Activated naive CD4-positive, alpha-beta T cell treated with anti-CD3 and anti-CD28 coated beads for 36 hours (primary cell): ENCODE measurements at regions of chr14 and their contacts with region 1.

Region 1: DNA sequence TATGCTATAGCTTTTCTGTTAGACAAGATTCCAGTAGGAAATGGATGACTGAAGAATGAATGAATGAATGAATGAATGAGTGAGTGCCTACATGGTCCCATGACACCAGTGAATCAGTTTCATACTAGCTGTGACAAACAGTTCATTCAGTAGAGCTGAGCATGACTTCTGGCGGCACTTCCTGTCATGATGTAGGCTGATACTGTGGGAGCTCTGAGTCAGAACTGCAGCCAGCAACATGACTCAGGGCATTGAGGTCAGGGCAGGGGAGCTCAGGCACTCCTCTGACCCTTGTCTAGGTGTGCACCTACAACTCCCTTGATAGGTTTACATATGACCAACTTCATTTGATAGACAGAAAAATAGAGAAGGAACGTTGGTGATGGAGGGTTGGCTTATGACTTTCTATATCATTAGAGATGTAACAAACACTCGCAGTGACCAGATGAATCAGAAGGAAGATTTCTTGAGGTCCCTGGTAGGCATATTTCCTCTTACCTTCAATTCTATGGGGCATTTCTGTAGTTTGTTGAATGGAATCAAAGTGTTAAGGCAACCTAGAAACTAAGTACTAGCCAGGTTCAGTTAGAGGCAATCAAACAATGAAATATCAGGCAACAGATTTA is 139.3 kb upstream of the ARHGAP5 start:
- DNase-seq: peak; percentile 89
- H3K4me3 Mint-ChIP-seq: no peak overlapping the region
- H3K27ac Mint-ChIP-seq: peak overlapping the region; percentile 20
- H3K4me1 Mint-ChIP-seq: peaks cover 20% of the 10 kb centered on the region
- H3K27me3 Mint-ChIP-seq: no peaks in the 10 kb centered on the region

Region 2: GRCh38 chr14:31592631-31593030 is 345.2 kb before region 1 on chr14:
- CTCF ChIA-PET with region 1: no interaction called
- intact Hi-C with region 1: no loop called
- DNase-seq: no peak
- H3K4me3 Mint-ChIP-seq: no peak overlapping the region
- H3K27ac Mint-ChIP-seq: no peak overlapping the region
- H3K4me1 Mint-ChIP-seq: no peaks in the 10 kb centered on the region
- H3K27me3 Mint-ChIP-seq: no peaks in the 10 kb centered on the region

Region 3: GRCh38 chr14:32192712-32193373 is 255.0 kb after region 1 on chr14:
- CTCF ChIA-PET with region 1: no interaction called
- intact Hi-C with region 1: loop called (anchors 2 kb)
- DNase-seq: peak; percentile 23
- H3K4me3 Mint-ChIP-seq: no peak overlapping the region
- H3K27ac Mint-ChIP-seq: no peak overlapping the region
- H3K4me1 Mint-ChIP-seq: peaks cover 14% of the 10 kb centered on the region
- H3K27me3 Mint-ChIP-seq: no peaks in the 10 kb centered on the region

Region 4: DNA sequence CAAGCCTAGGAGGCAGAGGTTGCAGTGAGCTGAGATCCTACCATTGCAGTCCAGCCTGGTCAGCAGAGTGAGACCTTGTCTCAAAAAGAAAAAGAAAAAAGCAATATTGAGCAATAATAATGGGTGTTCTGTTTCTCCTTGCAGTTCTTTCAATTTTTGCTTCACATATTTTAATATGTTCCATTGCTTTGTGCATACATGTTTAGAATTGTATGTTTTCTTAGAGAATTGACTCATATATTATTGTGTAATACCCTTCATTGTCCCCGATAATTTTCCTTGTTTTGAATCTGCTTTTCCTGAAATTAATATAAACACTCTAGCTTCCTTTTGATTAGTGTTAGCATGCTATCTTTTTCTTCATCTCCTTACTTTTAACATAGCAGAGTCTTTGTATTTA is 862.5 kb after region 1 on chr14:
- CTCF ChIA-PET with region 1: no interaction called
- intact Hi-C with region 1: no loop called
- DNase-seq: no peak
- H3K4me3 Mint-ChIP-seq: no peak overlapping the region
- H3K27ac Mint-ChIP-seq: no peak overlapping the region
- H3K4me1 Mint-ChIP-seq: no peaks in the 10 kb centered on the region
- H3K27me3 Mint-ChIP-seq: no peaks in the 10 kb centered on the region